T-cell (primary cell): ENCODE measurements at regions of chr5 and their contacts with region 1.

Region 1: DNA sequence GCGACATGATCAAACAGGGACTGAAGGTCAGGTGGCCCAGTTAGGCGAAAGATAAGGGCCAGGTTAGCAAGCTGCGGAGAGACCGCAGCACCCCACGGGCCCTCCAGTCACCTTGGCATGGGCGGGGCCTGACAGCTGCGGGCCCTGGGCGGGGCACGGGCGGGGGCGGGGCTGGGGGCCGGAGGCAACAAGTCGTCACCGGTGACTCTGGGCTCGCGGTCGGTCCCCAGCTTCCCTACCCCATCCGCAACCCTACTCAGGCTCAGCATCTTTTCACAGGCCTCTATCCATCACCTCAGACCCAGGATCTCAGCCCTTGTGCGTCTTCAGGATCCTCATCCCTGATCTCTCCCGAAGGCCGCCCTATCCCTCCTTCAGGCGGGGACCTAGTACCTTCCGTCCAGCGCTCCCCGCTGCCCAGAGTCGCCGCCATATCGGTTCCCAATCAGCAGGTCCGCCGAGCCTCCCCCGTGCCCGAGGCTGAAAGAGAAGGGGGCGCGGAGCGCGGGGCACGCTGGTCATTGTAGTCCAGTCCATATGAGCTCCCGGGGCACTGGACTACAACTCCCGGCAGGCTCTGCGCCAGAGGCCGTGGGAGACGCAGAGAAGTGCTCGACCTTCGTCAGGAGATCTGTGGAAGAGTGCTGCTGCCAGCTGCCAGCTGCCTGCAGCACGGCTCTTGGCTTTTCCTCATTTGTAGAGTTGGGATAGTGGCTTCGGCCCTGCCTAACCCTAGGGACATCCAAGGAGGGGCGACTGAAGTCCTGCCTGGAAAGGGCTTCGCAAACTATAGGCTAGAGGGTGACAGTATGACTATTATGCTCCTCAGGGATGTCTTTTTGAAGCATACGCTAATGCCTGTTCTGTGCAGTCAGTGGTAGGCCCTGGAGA is at the start of gene DNAJC18:
- DNase-seq: peak; percentile 77 to 92 (median 87)
- ATAC-seq: peak; percentile 89 to 93 (median 92)
- H3K4me3 ChIP-seq: peak within 1 kb of the TSS; percentile 83 to 90
- H3K4me3 Mint-ChIP-seq: peak within 1 kb of the TSS; percentile 86 to 99 (median 98)
- H3K27ac ChIP-seq: peak within 1 kb of the TSS; percentile 99
- H3K27ac Mint-ChIP-seq: peak within 1 kb of the TSS; percentile 99 to 100
- H3K4me1 ChIP-seq: peaks cover 22 to 27% of the 10 kb centered on the region in 2 experiments
- H3K4me1 Mint-ChIP-seq: peaks cover 44 to 56% (median 46%) of the 10 kb centered on the region in 3 donors
- H3K27me3 ChIP-seq: peaks cover 0 to 2% of the 10 kb centered on the region in 2 experiments
- H3K27me3 Mint-ChIP-seq: no peaks in the 10 kb centered on the region
- total RNA-seq, gene DNAJC18: 4.7 to 7.2 (median 6.4) TPM

Region 2: DNA sequence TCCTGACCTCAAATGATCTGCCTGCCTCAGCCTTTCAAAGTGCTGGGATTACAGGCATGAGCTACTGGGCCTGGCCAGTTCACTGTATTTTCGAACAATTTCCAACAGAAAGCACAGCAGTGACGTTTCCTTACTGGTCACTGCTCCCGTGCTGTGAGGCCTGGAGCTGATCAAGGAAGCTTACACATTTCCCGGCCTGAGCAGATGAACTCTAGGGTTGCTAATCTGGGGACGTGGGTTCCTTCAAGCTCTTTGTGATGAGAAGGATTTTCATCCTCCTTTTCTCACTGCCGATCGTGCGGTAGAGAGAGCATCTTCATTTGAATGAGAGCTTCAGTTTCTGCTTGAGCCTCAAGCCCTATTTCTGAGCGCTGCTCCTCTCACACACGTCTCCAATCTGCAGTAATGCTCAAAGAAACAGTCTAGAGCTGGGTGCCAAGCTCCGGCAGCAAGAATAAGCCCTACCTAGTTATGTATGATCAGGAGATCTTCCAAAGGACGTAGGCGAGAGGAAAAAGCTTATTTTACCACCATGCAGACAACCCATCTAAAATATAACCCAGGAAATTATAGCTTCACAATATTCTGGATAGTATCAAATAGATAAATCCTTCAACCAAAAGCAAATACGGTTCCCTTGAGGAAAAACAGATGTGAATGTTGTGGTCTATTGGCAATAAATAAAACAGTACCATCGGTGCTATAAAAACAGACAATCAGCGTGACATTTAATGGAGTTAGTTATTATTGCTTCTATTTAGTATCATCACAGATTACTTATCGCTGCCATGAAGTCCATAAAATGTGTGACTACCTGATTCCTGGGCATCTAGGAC is 28.0 kb before region 1 on chr5:
- CTCF ChIA-PET with region 1: no interaction called
- POLR2A ChIA-PET with region 1: interaction called in 1 of 2 experiments, 12 read pairs
- DNase-seq: no peak
- ATAC-seq: no peak
- H3K4me3 ChIP-seq: no peak overlapping the region
- H3K4me3 Mint-ChIP-seq: no peak overlapping the region
- H3K27ac ChIP-seq: no peak overlapping the region
- H3K27ac Mint-ChIP-seq: no peak overlapping the region
- H3K4me1 ChIP-seq: peaks cover 10 to 20% of the 10 kb centered on the region in 2 experiments
- H3K4me1 Mint-ChIP-seq: peaks cover 22 to 39% (median 27%) of the 10 kb centered on the region in 3 donors
- H3K27me3 ChIP-seq: no peaks in the 10 kb centered on the region
- H3K27me3 Mint-ChIP-seq: no peaks in the 10 kb centered on the region

Region 3: GRCh38 chr5:139482050-139482889 is 43.0 kb after region 1 on chr5 and contains the start of gene STING1:
- CTCF ChIA-PET with region 1: interaction called in 1 of 2 experiments, 10 read pairs
- POLR2A ChIA-PET with region 1: interaction called in 1 of 2 experiments, 9 read pairs
- DNase-seq: peak; percentile 32 to 82 (median 59)
- ATAC-seq: peak; percentile 72 to 89 (median 76)
- H3K4me3 ChIP-seq: peak within 1 kb of the TSS; percentile 78 to 83
- H3K4me3 Mint-ChIP-seq: peak within 1 kb of the TSS; percentile 86 to 89 (median 87)
- H3K27ac ChIP-seq: peak within 1 kb of the TSS; percentile 90
- H3K27ac Mint-ChIP-seq: peak within 1 kb of the TSS; percentile 97 to 98
- H3K4me1 ChIP-seq: peaks cover 6 to 62% of the 10 kb centered on the region in 2 experiments
- H3K4me1 Mint-ChIP-seq: peaks cover 34 to 44% (median 41%) of the 10 kb centered on the region in 3 donors
- H3K27me3 ChIP-seq: no peaks in the 10 kb centered on the region
- H3K27me3 Mint-ChIP-seq: no peaks in the 10 kb centered on the region
- total RNA-seq, gene STING1: 102 to 181 (median 138) TPM